ENCODE measurements at regions of chr2 and their contacts with region 1.

Region 1: GRCh38 chr2:99921903-99922302 is 220.5 kb downstream of the AFF3 start:
- DNase-seq: no peak
- ATAC-seq: no peak
- H3K4me3 Mint-ChIP-seq: no peak overlapping the region
- H3K27ac Mint-ChIP-seq: peak overlapping the region; percentile 11
- H3K4me1 Mint-ChIP-seq: peaks cover 70% of the 10 kb centered on the region
- H3K27me3 Mint-ChIP-seq: no peaks in the 10 kb centered on the region
- CTCF ChIP-seq: no peak

Region 2: GRCh38 chr2:99933913-99934650 is 12.2 kb after region 1 on chr2:
- CTCF ChIA-PET with region 1: interaction called, 3 read pairs
- POLR2A ChIA-PET with region 1: no interaction called
- intact Hi-C with region 1: loop called (anchors 2 kb)
- DNase-seq: no peak
- ATAC-seq: peak; percentile 45
- H3K4me3 Mint-ChIP-seq: no peak overlapping the region
- H3K27ac Mint-ChIP-seq: peak overlapping the region; percentile 84
- H3K4me1 Mint-ChIP-seq: peaks cover 67% of the 10 kb centered on the region
- H3K27me3 Mint-ChIP-seq: no peaks in the 10 kb centered on the region
- CTCF ChIP-seq: no peak

Measured in activated B cell treated with CpG ODN at 0.5 μM for 24 hours (primary cell).